WTC11 (cell line): ENCODE measurements at regions of chr16 and their contacts with region 1.

Region 1: GRCh38 chr16:29790183-29790952 is at the start of gene KIF22:
- DNase-seq: peak; percentile 100
- ATAC-seq: peak; percentile 96
- H3K4me3 Mint-ChIP-seq: peak within 1 kb of the TSS; percentile 98
- H3K27ac Mint-ChIP-seq: peak within 1 kb of the TSS; percentile 97
- H3K4me1 Mint-ChIP-seq: peaks cover 25% of the 10 kb centered on the region
- H3K27me3 Mint-ChIP-seq: peaks cover 19% of the 10 kb centered on the region
- CTCF ChIP-seq: no peak
- total RNA-seq, gene KIF22: 165 to 182 TPM (median 175 TPM) in 3 replicates

Region 2: DNA sequence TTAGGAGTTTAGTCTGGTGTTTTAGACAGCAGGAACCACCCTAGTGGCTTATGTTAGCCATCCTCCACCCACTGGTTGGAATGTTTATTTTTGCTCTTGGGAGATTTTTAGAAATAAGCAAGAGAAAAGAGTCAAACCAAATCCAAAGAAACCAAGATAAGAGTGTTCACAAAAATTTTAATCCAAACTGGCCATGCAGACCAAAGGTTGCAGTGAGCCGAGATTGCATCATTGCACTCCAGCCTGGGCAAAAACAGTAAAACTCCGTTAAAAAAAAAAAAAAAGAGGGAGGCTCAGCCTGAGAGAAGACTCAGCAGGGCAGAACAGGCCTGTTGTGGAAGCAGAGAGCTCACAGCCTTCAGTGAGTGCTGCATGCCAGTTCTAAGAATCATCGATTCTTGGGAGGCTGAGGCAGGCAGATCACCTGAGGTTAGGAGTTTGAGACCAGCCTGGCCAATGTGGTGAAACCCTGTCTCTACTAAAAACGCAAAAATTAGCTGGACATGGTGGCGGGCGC is 32.4 kb before region 1 on chr16:
- CTCF ChIA-PET with region 1: interaction called, 13 read pairs
- POLR2A ChIA-PET with region 1: no interaction called
- DNase-seq: no peak
- ATAC-seq: peak; percentile 41; the same call in 1 of the 2 replicates
- H3K4me3 Mint-ChIP-seq: no peak overlapping the region
- H3K27ac Mint-ChIP-seq: no peak overlapping the region; the same call in 1 of the 2 replicates
- H3K4me1 Mint-ChIP-seq: peaks cover 7% of the 10 kb centered on the region; the same call in 1 of the 2 replicates
- H3K27me3 Mint-ChIP-seq: peaks cover 13% of the 10 kb centered on the region
- CTCF ChIP-seq: no peak

Region 3: DNA sequence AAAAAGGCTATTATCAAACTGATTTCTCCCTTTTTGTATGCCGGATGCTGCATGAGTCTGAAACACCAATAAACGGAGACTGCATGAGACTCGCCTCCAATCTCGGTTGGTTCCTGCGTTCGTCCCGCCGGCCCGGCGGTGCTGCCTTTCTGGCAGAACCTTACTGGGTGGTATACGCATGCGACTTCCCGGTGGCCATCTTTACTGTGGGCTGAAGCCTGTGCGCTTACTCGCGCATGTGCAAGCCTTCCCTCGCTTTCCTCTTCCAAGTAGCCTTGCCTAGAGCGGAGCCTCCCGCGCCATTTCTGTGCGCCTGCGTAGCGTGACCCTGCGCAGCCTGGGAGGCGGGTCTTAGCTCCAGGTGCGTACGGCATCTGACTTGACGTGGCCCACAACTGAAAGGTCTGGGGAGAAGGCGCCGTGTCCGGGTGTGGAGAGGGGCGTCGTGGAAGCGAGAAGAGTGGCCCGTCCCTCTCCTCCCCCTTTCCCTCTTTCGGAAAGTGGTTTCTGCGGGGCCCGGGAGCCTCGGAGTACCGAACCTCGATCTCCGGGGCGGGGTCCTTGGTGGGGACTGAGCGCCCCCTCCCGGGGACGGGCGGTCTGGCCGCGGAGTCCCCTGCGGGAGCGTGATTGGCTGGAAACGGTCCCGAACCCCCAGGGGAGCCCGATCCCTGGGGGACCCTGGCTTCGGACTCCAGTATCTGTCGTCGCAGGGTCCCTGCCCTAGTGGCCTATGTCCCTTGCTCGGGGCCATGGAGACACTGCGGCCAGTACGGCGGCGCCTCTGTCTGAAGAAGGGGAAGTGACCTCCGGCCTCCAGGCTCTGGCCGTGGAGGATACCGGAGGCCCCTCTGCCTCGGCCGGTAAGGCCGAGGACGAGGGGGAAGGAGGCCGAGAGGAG is 25.7 kb after region 1 on chr16 and contains the start of gene PAGR1:
- CTCF ChIA-PET with region 1: interaction called, 28 read pairs
- POLR2A ChIA-PET with region 1: interaction called, 4 read pairs
- DNase-seq: peak; percentile 98
- ATAC-seq: peak; percentile 56
- H3K4me3 Mint-ChIP-seq: peak within 1 kb of the TSS; percentile 94
- H3K27ac Mint-ChIP-seq: peak within 1 kb of the TSS; percentile 100
- H3K4me1 Mint-ChIP-seq: peaks cover 56% of the 10 kb centered on the region
- H3K27me3 Mint-ChIP-seq: no peaks in the 10 kb centered on the region; the same call in 1 of the 2 replicates
- CTCF ChIP-seq: peak; percentile 81
- total RNA-seq, gene PAGR1: 60.1 to 69.0 TPM (median 66.8 TPM) in 3 replicates

Region 4: DNA sequence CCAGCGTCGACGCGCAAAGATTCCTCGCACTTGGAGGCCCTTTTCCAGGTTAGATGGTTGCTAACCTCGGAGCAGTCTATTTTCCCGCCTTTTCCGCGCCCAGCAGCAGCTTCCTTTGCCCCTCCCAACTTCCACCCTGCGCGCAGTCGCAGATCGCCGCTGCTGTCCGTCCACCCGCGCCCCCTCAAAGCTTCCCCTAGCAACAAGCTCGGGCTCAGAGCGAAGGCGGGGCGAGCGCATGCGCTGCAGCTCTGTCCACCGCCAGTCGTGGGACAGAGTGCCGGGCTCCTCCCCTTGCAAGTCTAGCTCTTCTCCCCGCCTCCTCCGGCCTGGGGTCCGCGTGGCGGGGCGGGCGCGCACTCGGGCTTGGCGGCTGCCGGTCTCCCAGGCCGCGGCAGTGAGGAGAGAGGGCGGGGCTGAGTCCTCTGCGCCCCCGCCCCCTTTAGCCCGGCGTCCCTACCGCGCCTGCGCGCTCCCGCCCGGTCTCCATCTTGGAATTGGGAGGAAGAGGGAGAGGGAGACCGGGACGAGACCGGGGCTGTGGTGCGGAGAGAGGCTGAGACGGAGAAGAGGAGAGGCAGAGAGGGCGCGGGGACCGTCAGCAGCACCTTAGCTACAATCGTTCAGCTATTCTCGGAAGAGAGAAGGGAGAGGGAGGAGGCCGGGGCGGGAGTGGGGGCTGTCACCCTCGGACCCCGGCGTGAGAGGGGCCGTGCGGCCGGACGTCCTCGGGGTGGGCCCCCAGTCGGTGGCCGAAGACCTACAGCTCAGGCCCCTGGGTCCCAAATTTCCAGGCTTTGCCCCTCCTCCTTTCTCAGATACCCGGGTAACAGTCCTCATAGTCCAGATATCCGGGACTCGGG is 183.2 kb after region 1 on chr16 and contains the start of gene TAOK2:
- CTCF ChIA-PET with region 1: no interaction called
- POLR2A ChIA-PET with region 1: no interaction called
- DNase-seq: peak; percentile 100
- ATAC-seq: peak; percentile 97
- H3K4me3 Mint-ChIP-seq: peak within 1 kb of the TSS; percentile 92
- H3K27ac Mint-ChIP-seq: peak within 1 kb of the TSS; percentile 82
- H3K4me1 Mint-ChIP-seq: peaks cover 27% of the 10 kb centered on the region
- H3K27me3 Mint-ChIP-seq: peaks cover 21% of the 10 kb centered on the region
- CTCF ChIP-seq: no peak
- total RNA-seq, gene TAOK2: 38.3 to 42.4 TPM (median 39.2 TPM) in 3 replicates